MCF 10A (cell line): ENCODE measurements at regions of chr5 and their contacts with region 1.

Region 1: GRCh38 chr5:122192497-122193496 is 63.5 kb downstream of the ZNF474 start:
- DNase-seq: peak; percentile 89
- H3K4me3 Mint-ChIP-seq: no peak overlapping the region
- H3K27ac Mint-ChIP-seq: no peak overlapping the region
- H3K4me1 Mint-ChIP-seq: peaks cover 5% of the 10 kb centered on the region
- H3K27me3 Mint-ChIP-seq: no peaks in the 10 kb centered on the region
- CTCF ChIP-seq: peak; percentile 77

Region 2: GRCh38 chr5:121634946-121635345 is 557.9 kb before region 1 on chr5:
- CTCF ChIA-PET with region 1: no interaction called
- POLR2A ChIA-PET with region 1: no interaction called
- intact Hi-C with region 1: no loop called
- DNase-seq: peak; percentile 14
- H3K4me3 Mint-ChIP-seq: no peak overlapping the region
- H3K27ac Mint-ChIP-seq: no peak overlapping the region
- H3K4me1 Mint-ChIP-seq: peaks cover 8% of the 10 kb centered on the region
- H3K27me3 Mint-ChIP-seq: no peaks in the 10 kb centered on the region
- CTCF ChIP-seq: no peak

Region 3: DNA sequence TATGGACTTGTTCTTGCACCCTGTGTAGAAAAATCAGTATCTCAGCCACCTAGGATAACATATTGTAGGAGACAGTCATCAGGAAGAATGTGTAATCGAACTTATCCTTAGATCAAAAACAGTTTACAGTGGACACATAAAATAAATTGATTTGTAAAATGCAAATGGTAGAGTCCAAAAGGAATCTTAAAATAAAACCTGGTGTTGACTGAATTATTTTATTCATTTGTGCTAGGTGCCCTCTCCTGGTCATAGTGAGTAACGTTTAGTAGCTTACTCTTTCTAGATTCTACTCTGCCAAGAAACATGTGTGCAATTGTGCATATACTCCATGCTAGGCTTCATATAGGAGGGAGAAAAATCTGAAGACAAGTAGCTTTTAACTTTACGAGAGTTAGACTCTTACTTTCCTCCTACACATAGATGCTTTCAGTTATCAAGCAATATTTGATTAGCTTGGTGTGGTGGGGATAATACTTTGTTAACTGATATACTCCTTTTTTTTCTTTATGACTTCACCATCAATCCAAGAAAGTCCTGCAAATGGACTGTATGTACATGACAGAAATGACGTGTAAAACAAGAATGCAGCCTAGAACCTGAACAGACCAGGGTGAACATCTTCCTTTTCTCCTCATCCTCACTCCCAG is 91.0 kb before region 1 on chr5:
- CTCF ChIA-PET with region 1: interaction called, 11 read pairs
- POLR2A ChIA-PET with region 1: interaction called, 3 read pairs
- intact Hi-C with region 1: no loop called
- DNase-seq: peak; percentile 76
- H3K4me3 Mint-ChIP-seq: no peak overlapping the region
- H3K27ac Mint-ChIP-seq: peak overlapping the region; percentile 35
- H3K4me1 Mint-ChIP-seq: peaks cover 19% of the 10 kb centered on the region
- H3K27me3 Mint-ChIP-seq: no peaks in the 10 kb centered on the region
- CTCF ChIP-seq: peak; percentile 67

Region 4: GRCh38 chr5:122202952-122203351 is 10.2 kb after region 1 on chr5:
- CTCF ChIA-PET with region 1: interaction called, 38 read pairs
- POLR2A ChIA-PET with region 1: no interaction called
- intact Hi-C with region 1: no loop called
- DNase-seq: no peak
- H3K4me3 Mint-ChIP-seq: no peak overlapping the region
- H3K27ac Mint-ChIP-seq: no peak overlapping the region
- H3K4me1 Mint-ChIP-seq: no peaks in the 10 kb centered on the region
- H3K27me3 Mint-ChIP-seq: peaks cover 19% of the 10 kb centered on the region
- CTCF ChIP-seq: no peak

Region 5: GRCh38 chr5:122297587-122298298 is 104.9 kb after region 1 on chr5:
- CTCF ChIA-PET with region 1: interaction called, 12 read pairs
- POLR2A ChIA-PET with region 1: no interaction called
- intact Hi-C with region 1: no loop called
- DNase-seq: no peak
- H3K4me3 Mint-ChIP-seq: no peak overlapping the region
- H3K27ac Mint-ChIP-seq: no peak overlapping the region
- H3K4me1 Mint-ChIP-seq: no peaks in the 10 kb centered on the region
- H3K27me3 Mint-ChIP-seq: no peaks in the 10 kb centered on the region
- CTCF ChIP-seq: no peak

Region 6: GRCh38 chr5:122408592-122409224 is 215.9 kb after region 1 on chr5:
- CTCF ChIA-PET with region 1: interaction called, 402 read pairs
- POLR2A ChIA-PET with region 1: interaction called, 4 read pairs
- intact Hi-C with region 1: no loop called
- DNase-seq: no peak
- H3K4me3 Mint-ChIP-seq: no peak overlapping the region
- H3K27ac Mint-ChIP-seq: no peak overlapping the region
- H3K4me1 Mint-ChIP-seq: peaks cover 13% of the 10 kb centered on the region
- H3K27me3 Mint-ChIP-seq: peaks cover 17% of the 10 kb centered on the region
- CTCF ChIP-seq: no peak

Region 7: DNA sequence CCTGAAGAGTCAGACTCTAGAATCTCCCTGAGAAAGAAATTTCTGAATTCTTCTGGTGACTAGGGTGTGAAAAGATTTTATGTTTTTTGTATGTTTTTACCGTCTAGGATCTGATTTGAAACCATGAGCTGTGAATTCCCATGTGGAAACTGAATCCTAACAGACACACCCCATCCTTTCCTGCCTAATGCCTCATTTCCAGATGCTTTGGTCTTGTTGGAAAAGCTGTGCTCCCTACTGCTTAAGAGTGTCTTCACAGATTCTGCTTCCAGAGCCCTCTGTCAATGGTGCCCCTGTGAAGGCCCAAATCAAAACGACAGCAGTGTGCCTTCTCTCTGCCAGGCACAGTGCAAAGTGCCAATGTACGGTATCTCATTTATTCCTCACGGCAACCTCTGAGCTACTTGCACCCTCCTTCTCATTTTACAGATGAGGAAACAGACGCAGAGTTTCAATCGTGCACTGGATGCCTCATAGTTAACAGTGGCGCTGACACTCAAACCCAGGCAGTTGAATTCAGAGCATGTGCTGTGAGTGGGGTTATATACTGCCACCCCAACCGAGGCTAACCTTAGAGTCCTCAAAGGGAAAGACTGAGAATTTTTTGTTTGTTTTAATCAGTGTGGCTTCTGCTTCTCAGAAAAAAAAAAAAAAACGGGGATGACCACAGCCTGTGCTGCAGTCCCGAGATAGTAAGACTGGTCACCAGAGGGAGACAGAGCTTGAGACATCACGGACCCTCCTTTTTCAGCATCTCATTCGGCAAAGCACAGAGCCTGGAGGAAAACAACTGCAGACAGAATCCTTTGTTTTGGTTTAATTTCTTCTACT is 307.7 kb after region 1 on chr5:
- CTCF ChIA-PET with region 1: interaction called, 67 read pairs
- POLR2A ChIA-PET with region 1: no interaction called
- intact Hi-C with region 1: loop called (anchors 1 kb)
- DNase-seq: peak; percentile 76
- H3K4me3 Mint-ChIP-seq: peak overlapping the region; percentile 5
- H3K27ac Mint-ChIP-seq: peak overlapping the region; percentile 71
- H3K4me1 Mint-ChIP-seq: peaks cover 23% of the 10 kb centered on the region
- H3K27me3 Mint-ChIP-seq: no peaks in the 10 kb centered on the region
- CTCF ChIP-seq: peak; percentile 53

Region 8: DNA sequence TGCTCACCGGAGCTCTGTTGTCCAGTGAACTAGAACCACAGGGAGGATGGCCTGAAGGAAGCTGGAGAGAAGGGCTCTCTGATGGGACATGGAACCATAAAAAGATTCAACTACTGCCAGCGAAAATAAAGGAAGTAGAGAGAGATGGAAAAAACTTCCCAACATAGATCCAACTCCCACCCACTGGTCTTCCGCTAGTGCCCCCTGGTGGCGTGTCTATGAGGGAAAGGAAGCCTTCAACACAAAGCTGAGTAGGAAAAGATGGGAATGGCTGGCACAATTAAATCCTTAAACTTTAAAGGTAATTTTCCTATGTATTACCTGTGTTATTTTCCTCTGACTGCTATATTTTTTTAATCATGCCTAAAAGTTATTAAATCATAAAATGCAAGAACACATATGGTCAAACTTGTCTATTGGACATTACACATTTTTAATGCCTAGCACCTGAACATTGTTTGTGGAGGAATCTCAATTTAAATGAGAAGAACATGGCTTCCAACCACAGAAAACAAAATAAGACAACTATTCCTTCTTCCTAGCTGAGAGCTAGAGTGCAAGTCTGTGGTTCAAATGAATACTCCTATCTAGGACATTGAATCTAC is 1178.9 kb after region 1 on chr5:
- CTCF ChIA-PET with region 1: interaction called, 5 read pairs
- POLR2A ChIA-PET with region 1: no interaction called
- intact Hi-C with region 1: loop called (anchors 2 kb)
- DNase-seq: peak; percentile 72
- H3K4me3 Mint-ChIP-seq: no peak overlapping the region
- H3K27ac Mint-ChIP-seq: no peak overlapping the region
- H3K4me1 Mint-ChIP-seq: no peaks in the 10 kb centered on the region
- H3K27me3 Mint-ChIP-seq: no peaks in the 10 kb centered on the region
- CTCF ChIP-seq: peak; percentile 49